CD8-positive, alpha-beta memory T cell (primary cell): ENCODE measurements at regions of chr5 and their contacts with region 1.

Region 1: GRCh38 chr5:75053304-75054133 is 1.2 kb upstream of the GCNT4 start:
- DNase-seq: peak; percentile 14 to 78 (median 60)
- H3K4me3 ChIP-seq: peak overlapping the region; percentile 67
- H3K4me3 Mint-ChIP-seq: peak overlapping the region; percentile 88 to 98 (median 93)
- H3K27ac ChIP-seq: peak overlapping the region; percentile 68
- H3K27ac Mint-ChIP-seq: peak overlapping the region; percentile 88 to 95 (median 94)
- H3K4me1 ChIP-seq: peaks cover 81% of the 10 kb centered on the region
- H3K4me1 Mint-ChIP-seq: peaks cover 66 to 87% (median 86%) of the 10 kb centered on the region in 3 donors
- H3K27me3 ChIP-seq: no peaks in the 10 kb centered on the region
- H3K27me3 Mint-ChIP-seq: peaks cover 0 to 3% of the 10 kb centered on the region in 2 donors

Region 2: DNA sequence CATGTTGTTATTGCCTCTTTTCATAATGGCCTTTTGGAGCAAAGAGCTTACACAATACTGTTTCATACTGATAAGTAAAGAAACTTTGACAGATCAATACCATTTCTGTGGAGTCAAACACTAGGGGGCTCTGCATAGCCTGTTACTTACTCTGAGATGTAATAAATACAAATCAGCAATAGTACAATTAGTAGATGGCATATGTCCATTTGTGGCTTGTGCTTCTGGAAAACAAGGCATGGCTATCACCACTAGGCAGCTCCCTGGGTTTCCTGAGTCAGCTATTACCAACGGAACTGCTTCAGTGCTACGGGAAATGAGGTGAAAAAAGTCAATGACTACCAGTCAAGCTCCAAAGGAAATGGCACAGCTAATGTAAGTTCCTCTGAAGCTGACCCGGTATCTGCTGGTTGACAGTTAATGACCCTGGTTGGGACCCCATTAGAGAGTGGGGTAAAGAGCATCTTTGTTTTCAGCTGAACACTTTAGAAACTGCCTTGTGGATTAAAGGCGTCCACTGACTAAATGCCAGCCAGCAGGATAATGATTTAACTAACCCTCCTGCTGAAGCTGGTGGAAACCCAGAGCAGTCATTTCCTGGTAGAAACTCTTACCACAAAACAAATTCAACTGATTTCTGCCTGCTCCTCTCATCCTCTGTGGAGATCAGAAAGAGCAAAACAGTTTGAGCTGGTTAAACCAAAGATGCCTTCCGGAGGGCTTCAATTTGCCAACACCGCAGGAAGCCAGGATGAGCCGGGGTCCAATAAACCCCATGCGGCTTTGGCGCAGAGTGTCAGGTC is 118.4 kb before region 1 on chr5:
- CTCF ChIA-PET with region 1: interaction called, 18 read pairs
- POLR2A ChIA-PET with region 1: interaction called, 6 read pairs
- DNase-seq: peak in 2 of 5 donors; percentile 22 to 46
- H3K4me3 ChIP-seq: peak overlapping the region; percentile 10
- H3K4me3 Mint-ChIP-seq: peak overlapping the region; percentile 21 to 87 (median 72)
- H3K27ac ChIP-seq: no peak overlapping the region
- H3K27ac Mint-ChIP-seq: peak overlapping the region in 7 of 8 donors; percentile 26 to 83 (median 70)
- H3K4me1 ChIP-seq: peaks cover 20% of the 10 kb centered on the region
- H3K4me1 Mint-ChIP-seq: peaks cover 18 to 42% (median 33%) of the 10 kb centered on the region in 3 donors
- H3K27me3 ChIP-seq: no peaks in the 10 kb centered on the region
- H3K27me3 Mint-ChIP-seq: peaks cover 12 to 16% of the 10 kb centered on the region in 2 donors

Region 3: GRCh38 chr5:75020016-75020656 is 33.4 kb before region 1 on chr5:
- CTCF ChIA-PET with region 1: interaction called, 10 read pairs
- POLR2A ChIA-PET with region 1: no interaction called
- DNase-seq: no peak
- H3K4me3 ChIP-seq: no peak overlapping the region
- H3K4me3 Mint-ChIP-seq: peak overlapping the region in 1 of 7 donors; percentile 39
- H3K27ac ChIP-seq: no peak overlapping the region
- H3K27ac Mint-ChIP-seq: peak overlapping the region in 1 of 8 donors; percentile 11
- H3K4me1 ChIP-seq: peaks cover 25% of the 10 kb centered on the region
- H3K4me1 Mint-ChIP-seq: peaks cover 47 to 76% (median 61%) of the 10 kb centered on the region in 3 donors
- H3K27me3 ChIP-seq: no peaks in the 10 kb centered on the region
- H3K27me3 Mint-ChIP-seq: no peaks in the 10 kb centered on the region

Region 4: DNA sequence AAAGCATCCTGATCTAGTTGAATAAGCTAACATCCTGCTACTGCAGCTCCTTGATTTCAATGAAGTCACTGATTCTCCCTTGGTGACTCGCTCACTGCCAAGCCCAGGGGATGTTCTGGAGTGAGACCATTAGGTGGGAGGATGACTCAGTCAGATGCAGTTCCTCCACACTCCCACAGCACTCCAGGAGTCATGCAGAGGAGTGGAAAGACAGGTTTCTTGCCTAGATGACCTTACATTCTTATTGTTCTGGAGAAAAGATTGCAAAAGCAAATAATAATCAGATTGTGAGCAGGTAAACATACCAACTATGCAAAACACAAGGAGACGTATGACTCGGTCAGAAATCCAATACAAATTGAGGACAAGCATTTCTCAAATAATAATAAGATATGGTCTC is 16.4 kb before region 1 on chr5:
- CTCF ChIA-PET with region 1: interaction called, 30 read pairs
- POLR2A ChIA-PET with region 1: interaction called, 5 read pairs
- DNase-seq: no peak
- H3K4me3 ChIP-seq: no peak overlapping the region
- H3K4me3 Mint-ChIP-seq: no peak overlapping the region
- H3K27ac ChIP-seq: no peak overlapping the region
- H3K27ac Mint-ChIP-seq: peak overlapping the region in 5 of 8 donors; percentile 21 to 61 (median 50)
- H3K4me1 ChIP-seq: peaks cover 36% of the 10 kb centered on the region
- H3K4me1 Mint-ChIP-seq: peaks cover 46 to 86% (median 73%) of the 10 kb centered on the region in 3 donors
- H3K27me3 ChIP-seq: no peaks in the 10 kb centered on the region
- H3K27me3 Mint-ChIP-seq: no peaks in the 10 kb centered on the region

Region 5: GRCh38 chr5:75412111-75412990 is 358.8 kb after region 1 on chr5:
- CTCF ChIA-PET with region 1: no interaction called
- POLR2A ChIA-PET with region 1: no interaction called
- DNase-seq: no peak
- H3K4me3 ChIP-seq: no peak overlapping the region
- H3K4me3 Mint-ChIP-seq: no peak overlapping the region
- H3K27ac ChIP-seq: no peak overlapping the region
- H3K27ac Mint-ChIP-seq: peak overlapping the region in 4 of 8 donors; percentile 1 to 30 (median 15)
- H3K4me1 ChIP-seq: no peaks in the 10 kb centered on the region
- H3K4me1 Mint-ChIP-seq: peaks cover 9 to 20% (median 12%) of the 10 kb centered on the region in 3 donors
- H3K27me3 ChIP-seq: no peaks in the 10 kb centered on the region
- H3K27me3 Mint-ChIP-seq: no peaks in the 10 kb centered on the region